CD4-positive, alpha-beta T cell (primary cell): ENCODE measurements at regions of chr16 and their contacts with region 1.

Region 1: GRCh38 chr16:56700195-56700594 is 17.9 kb downstream of the MT1X start:
- DNase-seq: no peak
- ATAC-seq: no peak
- H3K4me3 ChIP-seq: no peak overlapping the region
- H3K4me3 Mint-ChIP-seq: no peak overlapping the region
- H3K27ac ChIP-seq: no peak overlapping the region
- H3K27ac Mint-ChIP-seq: no peak overlapping the region
- H3K4me1 ChIP-seq: peaks cover 3% of the 10 kb centered on the region
- H3K4me1 Mint-ChIP-seq: peaks cover 9% of the 10 kb centered on the region
- H3K27me3 ChIP-seq: no peaks in the 10 kb centered on the region
- H3K27me3 Mint-ChIP-seq: no peaks in the 10 kb centered on the region
- CTCF ChIP-seq: no peak

Region 2: GRCh38 chr16:55711959-55712876 is 988.0 kb before region 1 on chr16:
- CTCF ChIA-PET with region 1: no interaction called
- POLR2A ChIA-PET with region 1: no interaction called
- intact Hi-C with region 1: loop called in 1 of 2 experiments (anchors 5 kb)
- DNase-seq: peak; percentile 22 to 72 (median 35)
- ATAC-seq: peak; percentile 34
- H3K4me3 ChIP-seq: no peak overlapping the region
- H3K4me3 Mint-ChIP-seq: no peak overlapping the region
- H3K27ac ChIP-seq: no peak overlapping the region
- H3K27ac Mint-ChIP-seq: no peak overlapping the region
- H3K4me1 ChIP-seq: no peaks in the 10 kb centered on the region
- H3K4me1 Mint-ChIP-seq: no peaks in the 10 kb centered on the region
- H3K27me3 ChIP-seq: peaks cover 4 to 10% of the 10 kb centered on the region in 2 experiments
- H3K27me3 Mint-ChIP-seq: peaks cover 61% of the 10 kb centered on the region
- CTCF ChIP-seq: peak; percentile 75

Region 3: GRCh38 chr16:56513972-56514371 is 186.2 kb before region 1 on chr16:
- CTCF ChIA-PET with region 1: interaction called, 15 read pairs
- POLR2A ChIA-PET with region 1: interaction called, 13 read pairs
- intact Hi-C with region 1: loop called (anchors 1 kb)
- DNase-seq: peak in 13 of 14 experiments; percentile 15 to 78 (median 33)
- ATAC-seq: peak; percentile 96
- H3K4me3 ChIP-seq: no peak overlapping the region
- H3K4me3 Mint-ChIP-seq: peak overlapping the region; percentile 46
- H3K27ac ChIP-seq: no peak overlapping the region
- H3K27ac Mint-ChIP-seq: peak overlapping the region; percentile 13
- H3K4me1 ChIP-seq: peaks cover 18% of the 10 kb centered on the region
- H3K4me1 Mint-ChIP-seq: peaks cover 58% of the 10 kb centered on the region
- H3K27me3 ChIP-seq: no peaks in the 10 kb centered on the region
- H3K27me3 Mint-ChIP-seq: no peaks in the 10 kb centered on the region
- CTCF ChIP-seq: peak; percentile 75

Region 4: DNA sequence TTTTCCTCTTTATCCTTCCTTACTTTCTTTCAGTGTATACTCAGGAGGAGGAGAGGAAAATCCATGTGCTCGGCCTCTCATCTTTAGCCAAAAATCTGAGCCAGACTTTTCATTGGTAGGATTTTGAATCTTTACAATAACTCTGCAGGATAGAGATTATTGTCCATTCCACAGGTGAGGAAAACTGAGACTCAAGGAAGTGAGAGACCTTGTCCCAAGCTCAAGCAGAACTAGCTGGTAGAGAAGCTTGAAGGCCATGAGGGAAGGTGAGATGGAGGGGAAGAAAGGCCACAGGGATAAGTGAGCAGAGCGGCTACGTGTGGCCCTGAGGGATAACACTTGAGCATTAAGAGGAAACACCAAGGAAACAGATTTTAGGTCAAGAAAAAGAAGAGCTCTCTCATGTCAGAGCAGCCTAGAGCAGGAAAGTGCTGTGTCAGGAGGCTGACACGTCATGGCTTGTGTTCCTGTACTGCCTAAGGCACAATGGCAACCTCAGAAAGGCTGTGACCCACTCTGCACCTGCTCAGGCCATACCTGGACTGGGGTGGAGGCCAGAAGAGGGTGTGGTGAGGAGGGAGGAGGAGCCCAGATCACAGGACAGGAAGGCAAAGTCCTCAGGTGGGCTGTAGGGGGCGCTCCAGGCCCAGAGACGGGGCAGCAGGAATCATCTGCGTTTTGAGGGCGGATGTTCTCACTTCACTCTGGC is 123.5 kb before region 1 on chr16:
- CTCF ChIA-PET with region 1: interaction called, 44 read pairs
- POLR2A ChIA-PET with region 1: interaction called, 17 read pairs
- intact Hi-C with region 1: loop called (anchors 1 kb)
- DNase-seq: peak; percentile 76 to 94 (median 86)
- ATAC-seq: peak; percentile 100
- H3K4me3 ChIP-seq: no peak overlapping the region
- H3K4me3 Mint-ChIP-seq: no peak overlapping the region
- H3K27ac ChIP-seq: no peak overlapping the region
- H3K27ac Mint-ChIP-seq: no peak overlapping the region
- H3K4me1 ChIP-seq: peaks cover 8% of the 10 kb centered on the region
- H3K4me1 Mint-ChIP-seq: peaks cover 9% of the 10 kb centered on the region
- H3K27me3 ChIP-seq: no peaks in the 10 kb centered on the region
- H3K27me3 Mint-ChIP-seq: no peaks in the 10 kb centered on the region
- CTCF ChIP-seq: peak; percentile 87

Region 5: GRCh38 chr16:56643080-56643778 is 57.0 kb before region 1 on chr16:
- CTCF ChIA-PET with region 1: interaction called, 20 read pairs
- POLR2A ChIA-PET with region 1: interaction called, 7 read pairs
- intact Hi-C with region 1: loop called in 1 of 2 experiments (anchors 2 kb)
- DNase-seq: peak; percentile 48 to 90 (median 70)
- ATAC-seq: peak; percentile 99
- H3K4me3 ChIP-seq: peak overlapping the region; percentile 46
- H3K4me3 Mint-ChIP-seq: peak overlapping the region; percentile 74
- H3K27ac ChIP-seq: no peak overlapping the region
- H3K27ac Mint-ChIP-seq: no peak overlapping the region
- H3K4me1 ChIP-seq: peaks cover 25% of the 10 kb centered on the region
- H3K4me1 Mint-ChIP-seq: peaks cover 25% of the 10 kb centered on the region
- H3K27me3 ChIP-seq: peaks cover 19 to 26% of the 10 kb centered on the region in 2 experiments
- H3K27me3 Mint-ChIP-seq: peaks cover 43% of the 10 kb centered on the region
- CTCF ChIP-seq: peak; percentile 46

Region 6: DNA sequence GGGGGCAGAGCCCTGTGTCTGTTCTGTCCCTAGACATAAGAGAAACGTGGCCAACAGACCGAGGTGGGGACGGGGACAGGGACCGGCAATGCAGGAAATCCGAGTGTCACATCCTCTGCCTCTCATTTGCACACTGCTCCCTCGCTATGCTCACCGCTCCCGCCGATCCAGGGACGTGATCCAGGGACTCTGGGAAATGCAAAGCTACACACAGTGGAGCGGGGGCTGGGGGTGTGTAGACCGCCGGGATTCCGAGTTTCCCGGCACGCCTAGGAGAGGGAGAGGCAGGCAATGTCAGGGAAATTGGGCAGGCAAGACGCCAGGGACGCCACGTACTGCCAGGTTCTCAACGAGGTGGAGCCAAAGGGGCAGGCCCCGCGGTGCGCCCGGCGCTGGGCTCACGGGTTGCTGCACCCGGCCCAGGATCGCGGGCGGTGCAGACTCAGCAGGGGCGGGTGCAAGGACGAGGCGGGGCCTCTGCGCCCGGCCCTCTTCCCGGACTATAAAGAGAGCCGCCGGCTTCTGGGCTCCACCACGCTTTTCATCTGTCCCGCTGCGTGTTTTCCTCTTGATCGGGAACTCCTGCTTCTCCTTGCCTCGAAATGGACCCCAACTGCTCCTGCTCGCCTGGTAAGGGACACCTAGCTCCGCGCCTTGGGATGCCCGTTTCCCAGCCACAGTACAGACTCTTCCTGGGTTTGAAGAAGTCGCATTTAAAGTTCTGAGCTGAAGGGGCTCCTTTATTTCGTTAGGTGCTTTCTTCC is 18.1 kb before region 1 on chr16 and contains the start of gene MT1X:
- CTCF ChIA-PET with region 1: interaction called, 11 read pairs
- POLR2A ChIA-PET with region 1: no interaction called
- intact Hi-C with region 1: loop called in 1 of 2 experiments (anchors 2 kb)
- DNase-seq: peak; percentile 72 to 94 (median 86)
- ATAC-seq: peak; percentile 99
- H3K4me3 ChIP-seq: peak within 1 kb of the TSS; percentile 83
- H3K4me3 Mint-ChIP-seq: peak within 1 kb of the TSS; percentile 96
- H3K27ac ChIP-seq: peak within 1 kb of the TSS; percentile 50 to 71
- H3K27ac Mint-ChIP-seq: peak within 1 kb of the TSS; percentile 93
- H3K4me1 ChIP-seq: peaks cover 28% of the 10 kb centered on the region
- H3K4me1 Mint-ChIP-seq: peaks cover 27% of the 10 kb centered on the region
- H3K27me3 ChIP-seq: no peaks in the 10 kb centered on the region
- H3K27me3 Mint-ChIP-seq: no peaks in the 10 kb centered on the region
- CTCF ChIP-seq: no peak
- total RNA-seq, gene MT1X: 10.9 to 14.1 TPM

Region 7: GRCh38 chr16:56814537-56815432 is 114.6 kb after region 1 on chr16:
- CTCF ChIA-PET with region 1: no interaction called
- POLR2A ChIA-PET with region 1: no interaction called
- intact Hi-C with region 1: no loop called
- DNase-seq: no peak
- ATAC-seq: no peak
- H3K4me3 ChIP-seq: no peak overlapping the region
- H3K4me3 Mint-ChIP-seq: no peak overlapping the region
- H3K27ac ChIP-seq: no peak overlapping the region
- H3K27ac Mint-ChIP-seq: no peak overlapping the region
- H3K4me1 ChIP-seq: no peaks in the 10 kb centered on the region
- H3K4me1 Mint-ChIP-seq: no peaks in the 10 kb centered on the region
- H3K27me3 ChIP-seq: no peaks in the 10 kb centered on the region
- H3K27me3 Mint-ChIP-seq: no peaks in the 10 kb centered on the region
- CTCF ChIP-seq: no peak